CD8-positive, alpha-beta memory T cell (primary cell): ENCODE measurements at regions of chr10 and their contacts with region 1.

Region 1: DNA sequence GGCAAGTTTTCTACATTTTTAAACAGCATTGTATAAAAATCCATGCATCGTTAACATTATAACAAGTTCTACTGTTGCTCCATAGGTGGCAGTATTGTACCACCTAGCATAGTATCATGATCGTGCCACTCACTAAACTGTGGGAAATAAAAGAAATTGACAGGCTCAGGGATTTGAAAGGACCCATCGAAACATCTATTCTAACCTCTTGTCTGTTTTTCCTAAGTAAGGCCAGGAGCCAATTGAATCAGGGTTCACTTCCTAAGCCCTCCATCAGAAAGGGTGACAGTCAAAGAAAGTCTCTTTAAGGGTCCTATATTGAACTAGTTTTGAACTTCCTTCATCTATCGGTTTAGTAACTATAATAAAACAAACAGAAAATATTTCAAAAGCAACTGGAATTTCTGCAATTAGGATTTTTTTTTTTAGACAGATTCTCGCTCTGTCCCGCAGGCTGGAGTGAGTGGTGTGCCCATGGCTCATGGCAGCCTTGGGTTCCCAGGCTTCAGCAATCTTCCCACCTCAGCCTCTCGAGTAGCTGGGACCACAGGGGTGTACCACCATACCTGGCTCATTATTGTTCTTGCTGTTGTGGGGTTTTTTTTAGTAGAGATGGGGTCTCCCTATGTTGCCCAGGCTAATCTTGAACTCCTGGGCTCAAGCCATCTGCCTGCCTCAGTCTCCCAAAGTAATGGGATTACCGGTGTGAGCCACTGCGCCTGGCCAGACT is 9.4 kb downstream of the HACD1 start:
- DNase-seq: peak in 2 of 5 donors; percentile 36 to 42
- H3K4me3 ChIP-seq: no peak overlapping the region
- H3K4me3 Mint-ChIP-seq: no peak overlapping the region
- H3K27ac ChIP-seq: no peak overlapping the region
- H3K27ac Mint-ChIP-seq: no peak overlapping the region
- H3K4me1 ChIP-seq: no peaks in the 10 kb centered on the region
- H3K4me1 Mint-ChIP-seq: peaks cover 0 to 8% (median 3%) of the 10 kb centered on the region in 3 donors
- H3K27me3 ChIP-seq: no peaks in the 10 kb centered on the region
- H3K27me3 Mint-ChIP-seq: peaks cover 0 to 4% of the 10 kb centered on the region in 2 donors

Region 2: GRCh38 chr10:17586821-17587234 is 20.9 kb before region 1 on chr10:
- CTCF ChIA-PET with region 1: no interaction called
- POLR2A ChIA-PET with region 1: no interaction called
- DNase-seq: no peak
- H3K4me3 ChIP-seq: no peak overlapping the region
- H3K4me3 Mint-ChIP-seq: peak overlapping the region in 4 of 7 donors; percentile 35 to 70 (median 47)
- H3K27ac ChIP-seq: no peak overlapping the region
- H3K27ac Mint-ChIP-seq: peak overlapping the region in 2 of 8 donors; percentile 15 to 55
- H3K4me1 ChIP-seq: no peaks in the 10 kb centered on the region
- H3K4me1 Mint-ChIP-seq: peaks cover 5 to 19% (median 12%) of the 10 kb centered on the region in 3 donors
- H3K27me3 ChIP-seq: no peaks in the 10 kb centered on the region
- H3K27me3 Mint-ChIP-seq: peaks cover 5 to 6% of the 10 kb centered on the region in 2 donors

Region 3: DNA sequence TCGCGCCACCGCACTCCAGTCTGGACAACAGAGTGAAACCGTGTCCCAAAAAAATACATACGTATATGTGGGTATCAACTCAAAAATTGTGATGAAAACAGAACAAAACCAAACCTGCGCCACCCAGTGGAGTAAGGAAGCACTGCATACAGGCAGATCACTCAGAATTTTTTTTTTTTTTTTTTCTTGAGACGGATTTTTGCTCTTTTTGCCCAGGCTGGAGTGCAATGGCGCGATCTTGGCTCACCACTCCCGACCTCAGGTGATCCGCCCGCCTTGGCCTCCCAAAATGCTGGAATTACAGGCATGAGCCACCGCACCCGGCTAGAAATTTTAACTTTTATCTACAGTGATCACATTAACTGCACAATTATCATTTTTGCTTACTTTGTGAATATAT is 135.2 kb after region 1 on chr10:
- CTCF ChIA-PET with region 1: interaction called, 21 read pairs
- POLR2A ChIA-PET with region 1: no interaction called
- DNase-seq: peak; percentile 36 to 74 (median 56)
- H3K4me3 ChIP-seq: no peak overlapping the region
- H3K4me3 Mint-ChIP-seq: no peak overlapping the region
- H3K27ac ChIP-seq: no peak overlapping the region
- H3K27ac Mint-ChIP-seq: no peak overlapping the region
- H3K4me1 ChIP-seq: no peaks in the 10 kb centered on the region
- H3K4me1 Mint-ChIP-seq: peaks cover 4 to 10% (median 5%) of the 10 kb centered on the region in 3 donors
- H3K27me3 ChIP-seq: no peaks in the 10 kb centered on the region
- H3K27me3 Mint-ChIP-seq: no peaks in the 10 kb centered on the region